SK-N-SH (cell line): ENCODE measurements at regions of chr17 and their contacts with region 1.

Region 1: DNA sequence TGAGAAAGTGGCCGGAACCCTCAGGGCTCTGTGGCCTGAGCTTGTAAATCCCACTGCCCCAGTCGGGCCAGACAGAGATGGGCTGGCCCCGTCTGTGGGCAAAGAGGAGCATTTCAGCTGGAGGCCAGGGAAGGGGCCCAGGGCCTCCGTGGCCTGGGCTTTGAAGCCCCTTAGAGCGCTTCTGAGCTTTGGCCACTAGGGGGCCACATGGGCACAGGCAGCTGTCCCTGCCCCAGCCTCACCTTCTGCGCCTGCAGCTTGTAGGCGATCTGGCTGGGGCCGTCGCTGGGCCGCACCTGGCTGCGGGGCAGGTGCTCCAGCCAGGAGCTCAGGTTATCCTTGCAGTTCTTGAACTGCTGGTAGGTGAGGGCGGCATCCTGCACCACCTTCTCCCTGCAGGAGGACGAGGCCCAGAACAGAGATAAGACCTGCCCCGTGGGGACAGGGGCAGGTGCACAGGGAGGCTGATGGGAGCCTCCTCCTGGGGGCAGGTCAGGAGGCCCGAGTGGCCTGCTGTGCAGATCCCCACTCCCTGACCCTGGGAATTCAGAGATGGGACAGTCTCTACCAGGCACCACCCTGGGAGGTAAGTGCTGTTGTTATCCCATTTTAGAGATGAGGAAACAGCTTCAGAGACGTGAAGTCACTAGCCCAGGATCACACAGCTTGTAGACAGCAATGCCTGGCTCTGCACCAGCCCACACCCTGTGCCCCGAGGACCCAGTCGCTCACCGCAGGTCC is 12.8 kb downstream of the EVPL start:
- DNase-seq: peak; percentile 97
- H3K4me3 ChIP-seq: no peak overlapping the region
- H3K27ac ChIP-seq: no peak overlapping the region
- H3K4me1 ChIP-seq: peaks cover 10 to 13% of the 10 kb centered on the region in 2 experiments; a peak in 2 of 4 replicates
- H3K27me3 ChIP-seq: no peaks in the 10 kb centered on the region
- CTCF ChIP-seq: peak; percentile 99
- EP300 ChIP-seq: no peak
- RAD21 ChIP-seq: peak; percentile 95

Region 2: DNA sequence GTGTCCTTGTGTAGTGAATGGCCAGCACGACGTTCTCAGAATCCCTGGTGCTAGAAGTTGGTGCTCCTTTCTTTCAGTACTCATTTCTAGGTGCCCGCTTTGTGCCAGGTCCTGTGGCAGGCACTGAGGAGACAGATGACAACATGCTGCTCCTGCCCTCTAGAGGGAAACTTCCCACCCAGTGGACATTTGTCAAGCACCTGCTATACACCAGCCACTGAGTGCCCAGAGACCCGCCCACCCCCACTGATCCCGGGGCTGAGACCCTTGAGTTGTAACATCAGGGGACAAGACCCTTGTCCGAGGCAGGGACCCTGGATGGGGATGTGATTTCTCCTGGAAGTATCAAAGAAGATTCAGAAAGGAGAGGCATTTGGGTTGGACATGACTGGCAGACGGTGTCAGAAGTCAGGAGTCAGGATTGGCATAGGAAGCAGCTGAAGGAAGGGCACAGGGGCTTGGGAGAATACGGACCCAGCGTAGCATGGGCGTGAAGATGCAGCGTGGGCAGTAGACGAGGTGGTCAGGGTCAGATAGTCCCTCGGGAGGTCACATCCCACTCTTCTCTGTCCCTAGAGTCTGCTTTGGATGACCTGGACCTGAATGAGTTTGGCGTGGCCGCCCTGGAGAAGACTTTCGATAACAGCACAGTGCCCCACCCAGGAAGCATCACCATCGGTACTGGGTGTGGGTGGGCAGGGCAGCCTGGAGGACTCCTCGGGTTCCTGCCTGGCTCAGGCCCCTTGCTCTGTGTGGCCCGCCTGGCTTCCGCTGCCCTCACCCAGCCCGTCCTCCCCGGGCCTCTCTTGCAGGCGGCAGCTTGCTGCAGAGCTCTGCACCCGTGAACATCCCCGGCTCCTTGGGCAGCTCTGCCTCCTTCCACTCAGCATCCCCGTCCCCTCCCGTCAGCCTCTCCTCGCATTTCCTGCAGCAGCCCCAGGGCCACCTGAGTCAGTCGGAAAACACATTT is 195.0 kb before region 1 on chr17:
- CTCF ChIA-PET with region 1: no interaction called
- POLR2A ChIA-PET with region 1: no interaction called
- DNase-seq: peak; percentile 41
- H3K4me3 ChIP-seq: no peak overlapping the region
- H3K27ac ChIP-seq: no peak overlapping the region
- H3K4me1 ChIP-seq: peaks cover 10 to 22% of the 10 kb centered on the region in 2 experiments; a peak in 3 of 4 replicates
- H3K27me3 ChIP-seq: no peaks in the 10 kb centered on the region
- CTCF ChIP-seq: no peak
- EP300 ChIP-seq: no peak
- RAD21 ChIP-seq: no peak

Region 3: DNA sequence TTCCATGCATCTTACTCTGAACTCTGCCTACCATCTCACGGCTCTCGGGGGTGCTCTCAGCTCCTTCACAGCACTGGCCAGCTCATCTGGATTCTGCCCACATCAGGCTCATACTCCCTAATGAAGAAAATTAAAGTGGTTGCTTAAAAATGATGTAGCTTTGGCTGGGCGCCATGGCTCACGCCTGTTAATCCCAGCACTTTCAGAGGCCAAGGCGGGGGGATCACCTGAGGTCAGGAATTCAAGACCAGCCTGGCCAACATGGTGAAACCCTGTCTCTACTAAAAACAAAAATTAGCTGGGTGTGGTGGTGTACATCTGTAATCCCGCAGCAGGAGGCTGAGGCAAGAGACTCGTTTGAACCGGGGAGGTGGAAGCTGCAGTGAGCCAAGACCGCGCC is 76.2 kb before region 1 on chr17:
- CTCF ChIA-PET with region 1: no interaction called
- POLR2A ChIA-PET with region 1: no interaction called
- DNase-seq: no peak
- H3K4me3 ChIP-seq: no peak overlapping the region
- H3K27ac ChIP-seq: no peak overlapping the region
- H3K4me1 ChIP-seq: peaks cover 0 to 8% of the 10 kb centered on the region in 2 experiments; a peak in 1 of 4 replicates
- H3K27me3 ChIP-seq: no peaks in the 10 kb centered on the region
- CTCF ChIP-seq: no peak
- EP300 ChIP-seq: no peak
- RAD21 ChIP-seq: no peak

Region 4: GRCh38 chr17:76027159-76027839 is 12.9 kb after region 1 on chr17 and contains the start of gene EVPL:
- CTCF ChIA-PET with region 1: interaction called, 133 read pairs
- POLR2A ChIA-PET with region 1: interaction called, 3 read pairs
- DNase-seq: no peak
- H3K4me3 ChIP-seq: no peak within 1 kb of the TSS
- H3K27ac ChIP-seq: no peak within 1 kb of the TSS
- H3K4me1 ChIP-seq: peaks cover 9 to 13% of the 10 kb centered on the region in 2 experiments; a peak in 3 of 4 replicates
- H3K27me3 ChIP-seq: no peaks in the 10 kb centered on the region
- CTCF ChIP-seq: no peak
- EP300 ChIP-seq: no peak
- RAD21 ChIP-seq: no peak
- polyA plus RNA-seq, gene EVPL: 0.15 and 0.23 TPM in 2 replicates

Region 5: DNA sequence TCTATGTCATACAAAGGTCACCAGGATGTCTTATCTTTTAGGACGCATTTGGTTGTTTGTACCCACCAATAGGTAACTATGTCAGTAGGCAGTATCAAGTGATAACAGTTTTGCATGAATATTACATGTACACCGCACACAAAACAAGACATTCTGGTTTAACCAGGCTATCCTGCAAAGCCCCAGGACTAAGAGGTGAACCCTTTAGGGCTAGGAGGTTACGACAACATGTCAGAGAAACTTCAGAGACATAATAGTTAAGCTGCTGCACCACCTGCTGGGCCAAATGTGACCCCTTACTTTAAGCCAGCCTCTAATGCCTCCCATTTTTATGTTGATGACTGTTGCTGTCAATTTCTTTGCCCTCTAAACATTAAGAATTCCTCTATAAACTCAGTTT is 42.5 kb after region 1 on chr17:
- CTCF ChIA-PET with region 1: interaction called, 22 read pairs
- POLR2A ChIA-PET with region 1: no interaction called
- DNase-seq: no peak
- H3K4me3 ChIP-seq: no peak overlapping the region
- H3K27ac ChIP-seq: no peak overlapping the region
- H3K4me1 ChIP-seq: no peaks in the 10 kb centered on the region
- H3K27me3 ChIP-seq: no peaks in the 10 kb centered on the region
- CTCF ChIP-seq: no peak
- EP300 ChIP-seq: no peak
- RAD21 ChIP-seq: no peak

Region 6: GRCh38 chr17:76103274-76104139 is 89.2 kb after region 1 on chr17 and contains the start of gene EXOC7:
- CTCF ChIA-PET with region 1: interaction called, 33 read pairs
- POLR2A ChIA-PET with region 1: no interaction called
- DNase-seq: peak; percentile 100
- H3K4me3 ChIP-seq: peak within 1 kb of the TSS; percentile 68 to 95
- H3K27ac ChIP-seq: peak within 1 kb of the TSS; percentile 71 to 87
- H3K4me1 ChIP-seq: peaks cover 3 to 15% of the 10 kb centered on the region in 2 experiments; a peak in 2 of 4 replicates
- H3K27me3 ChIP-seq: no peaks in the 10 kb centered on the region
- CTCF ChIP-seq: peak; percentile 13; the same call in 1 of the 2 replicates
- EP300 ChIP-seq: no peak
- RAD21 ChIP-seq: no peak
- polyA plus RNA-seq, gene EXOC7: 129 and 167 TPM in 2 replicates

Region 7: GRCh38 chr17:76182016-76182764 is 167.8 kb after region 1 on chr17:
- CTCF ChIA-PET with region 1: interaction called, 47 read pairs
- POLR2A ChIA-PET with region 1: interaction called, 4 read pairs
- DNase-seq: peak; percentile 94
- H3K4me3 ChIP-seq: no peak overlapping the region; a peak in 1 of 4 replicates
- H3K27ac ChIP-seq: no peak overlapping the region
- H3K4me1 ChIP-seq: peaks cover 0 to 3% of the 10 kb centered on the region in 2 experiments; a peak in 1 of 4 replicates
- H3K27me3 ChIP-seq: no peaks in the 10 kb centered on the region
- CTCF ChIP-seq: peak; percentile 99
- EP300 ChIP-seq: peak in 1 of 2 experiments; percentile 31; a peak in 1 of 4 replicates
- RAD21 ChIP-seq: peak; percentile 76